AG04449 (cell line): ENCODE measurements at regions of chr11 and their contacts with region 1.

Region 1: DNA sequence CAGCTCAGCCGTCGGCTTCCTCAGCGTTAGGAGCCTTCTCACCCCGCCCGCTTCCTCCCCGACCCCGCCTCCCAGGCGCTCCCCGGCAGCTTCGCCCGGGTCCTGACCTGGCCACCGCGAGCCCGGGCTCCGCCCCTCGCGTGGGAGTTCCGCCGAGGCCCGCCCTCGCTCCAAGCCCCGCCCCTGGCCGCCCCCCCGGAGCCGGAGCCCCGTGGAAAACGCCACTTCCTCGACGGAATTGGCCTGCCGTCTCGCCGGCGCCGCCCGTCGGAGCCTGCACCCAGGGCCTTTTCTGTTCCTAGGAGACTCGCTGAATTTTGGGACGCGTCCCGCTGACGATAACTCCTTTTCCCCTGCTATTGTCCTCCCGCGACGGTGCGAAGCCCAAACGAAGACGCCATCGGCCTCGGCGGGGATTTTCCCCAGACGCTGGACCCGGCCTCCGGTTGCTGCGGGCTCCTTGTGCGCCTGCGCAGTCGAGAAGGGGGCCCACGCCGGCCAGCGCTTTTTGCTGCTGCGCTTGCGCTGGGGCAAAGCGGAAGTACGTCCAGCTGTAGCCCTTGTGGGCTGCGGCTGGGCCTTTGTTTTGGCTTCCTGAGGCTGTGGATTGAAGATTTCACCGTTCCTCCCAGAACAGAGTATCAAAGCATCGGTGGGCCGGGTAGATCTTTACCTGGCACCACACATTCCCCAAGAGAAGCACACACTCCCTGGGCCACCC is 10.0 kb downstream of the RELA start:
- DNase-seq: no peak
- H3K4me3 ChIP-seq: peak overlapping the region; percentile 60
- CTCF ChIP-seq: no peak

Region 2: GRCh38 chr11:65625628-65626342 is 26.9 kb before region 1 on chr11:
- CTCF ChIA-PET with region 1: no interaction called
- POLR2A ChIA-PET with region 1: no interaction called
- DNase-seq: no peak
- H3K4me3 ChIP-seq: no peak overlapping the region
- CTCF ChIP-seq: peak; percentile 52

Region 3: GRCh38 chr11:65637794-65638317 is 14.8 kb before region 1 on chr11 and contains the start of gene SIPA1:
- CTCF ChIA-PET with region 1: interaction called, 7 read pairs
- POLR2A ChIA-PET with region 1: interaction called, 17 read pairs
- DNase-seq: no peak
- H3K4me3 ChIP-seq: peak within 1 kb of the TSS; percentile 78
- CTCF ChIP-seq: peak; percentile 65

Region 4: GRCh38 chr11:65662799-65663638 is 10.3 kb after region 1 on chr11 and contains the start of gene RELA:
- CTCF ChIA-PET with region 1: interaction called, 5 read pairs
- POLR2A ChIA-PET with region 1: interaction called, 24 read pairs
- DNase-seq: peak; percentile 63
- H3K4me3 ChIP-seq: peak within 1 kb of the TSS; percentile 97
- CTCF ChIP-seq: no peak